Mammary epithelial cell (primary cell): ENCODE measurements at regions of chr1 and their contacts with region 1.

Region 1: DNA sequence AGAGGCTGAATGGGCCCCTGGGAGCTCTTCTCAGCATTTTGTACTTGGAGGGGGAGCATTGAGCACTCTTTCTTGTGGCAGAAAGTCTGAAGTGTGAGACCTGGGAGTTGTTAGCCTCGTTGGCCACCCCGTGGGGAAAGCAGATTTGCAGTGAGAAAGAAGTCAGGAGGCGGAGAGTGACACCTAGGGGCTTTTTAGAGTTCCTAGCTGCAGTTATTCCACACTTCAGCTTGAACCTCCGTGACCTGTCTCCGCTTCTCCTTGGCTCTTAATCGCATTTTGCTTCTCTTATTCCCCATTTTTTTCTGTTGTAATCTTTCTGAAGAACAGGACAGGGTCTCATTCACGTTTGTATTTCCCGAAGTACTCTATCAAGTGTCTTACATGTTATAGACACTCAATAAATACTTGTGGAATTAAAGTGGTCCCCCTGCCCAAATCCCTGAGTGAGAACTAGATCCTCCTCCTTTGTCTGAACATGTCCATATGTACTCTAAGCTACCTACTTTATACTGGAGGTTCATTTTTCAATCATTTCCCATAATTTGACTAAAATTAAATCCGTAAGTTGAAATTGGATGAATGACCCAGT is 14.5 kb upstream of the C1orf141 start:
- DNase-seq: peak; percentile 75
- H3K4me3 ChIP-seq: no peak overlapping the region
- H3K27ac ChIP-seq: peak overlapping the region; percentile 13
- H3K4me1 ChIP-seq: peaks cover 23% of the 10 kb centered on the region
- H3K27me3 ChIP-seq: no peaks in the 10 kb centered on the region
- CTCF ChIP-seq: peak; percentile 84 to 93

Region 2: DNA sequence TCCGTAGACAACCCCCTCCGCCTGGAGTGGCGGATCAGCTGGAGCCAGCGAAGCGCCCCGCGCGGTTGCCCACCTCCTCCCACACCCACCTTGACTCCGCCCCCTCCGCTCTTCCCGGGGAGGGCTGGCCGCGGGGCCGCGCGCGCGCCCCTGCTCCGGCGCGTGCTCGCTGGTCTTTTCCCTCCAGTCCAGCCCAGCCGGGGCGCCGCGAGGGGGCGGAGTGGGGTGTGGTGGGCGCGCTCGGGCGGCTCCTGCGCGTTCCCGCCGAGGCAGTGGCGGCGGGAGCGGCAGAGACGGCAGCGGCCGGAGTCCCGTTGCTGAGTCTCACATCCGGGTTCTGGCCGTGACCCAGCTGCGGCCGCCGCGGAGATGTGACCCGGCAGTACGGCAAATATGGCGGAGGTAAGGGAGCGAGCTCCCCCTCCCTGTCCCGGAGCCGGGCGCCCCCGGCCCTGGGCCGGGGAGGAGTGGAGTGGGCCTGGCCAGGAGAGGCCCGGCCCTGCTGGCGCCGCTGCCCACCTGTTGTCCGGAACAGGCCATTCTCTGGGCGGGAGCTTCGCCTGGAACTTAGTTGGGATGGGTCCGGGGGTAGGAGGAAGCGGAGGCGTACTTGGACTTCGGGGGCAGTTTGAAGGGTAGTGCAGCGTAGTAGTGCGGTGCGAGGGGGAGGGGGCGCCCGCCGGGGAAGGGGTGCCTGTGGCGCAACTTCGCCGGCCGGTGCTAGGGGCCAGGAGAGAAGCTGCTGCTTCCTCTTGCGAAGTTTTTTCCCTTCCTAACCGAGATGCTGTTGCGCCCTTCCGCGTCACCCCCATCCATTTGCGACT is 219.1 kb before region 1 on chr1:
- CTCF ChIA-PET with region 1: no interaction called
- dilution Hi-C with region 1: no loop called
- in situ Hi-C with region 1: no loop called
- intact Hi-C with region 1: loop called (anchors 5 kb)
- DNase-seq: peak; percentile 96
- H3K4me3 ChIP-seq: peak overlapping the region; percentile 70 to 87 (median 85)
- H3K27ac ChIP-seq: peak overlapping the region; percentile 91
- H3K4me1 ChIP-seq: peaks cover 19% of the 10 kb centered on the region
- H3K27me3 ChIP-seq: no peaks in the 10 kb centered on the region
- CTCF ChIP-seq: peak in 1 of 2 donors; percentile 24

Region 3: GRCh38 chr1:66996018-66996682 is 153.1 kb before region 1 on chr1:
- CTCF ChIA-PET with region 1: interaction called, 10 read pairs
- dilution Hi-C with region 1: no loop called
- in situ Hi-C with region 1: loop called (anchors 5 kb)
- intact Hi-C with region 1: loop called (anchors 1 kb)
- DNase-seq: peak; percentile 54
- H3K4me3 ChIP-seq: no peak overlapping the region
- H3K27ac ChIP-seq: no peak overlapping the region
- H3K4me1 ChIP-seq: no peaks in the 10 kb centered on the region
- H3K27me3 ChIP-seq: no peaks in the 10 kb centered on the region
- CTCF ChIP-seq: peak; percentile 86 to 87

Region 4: DNA sequence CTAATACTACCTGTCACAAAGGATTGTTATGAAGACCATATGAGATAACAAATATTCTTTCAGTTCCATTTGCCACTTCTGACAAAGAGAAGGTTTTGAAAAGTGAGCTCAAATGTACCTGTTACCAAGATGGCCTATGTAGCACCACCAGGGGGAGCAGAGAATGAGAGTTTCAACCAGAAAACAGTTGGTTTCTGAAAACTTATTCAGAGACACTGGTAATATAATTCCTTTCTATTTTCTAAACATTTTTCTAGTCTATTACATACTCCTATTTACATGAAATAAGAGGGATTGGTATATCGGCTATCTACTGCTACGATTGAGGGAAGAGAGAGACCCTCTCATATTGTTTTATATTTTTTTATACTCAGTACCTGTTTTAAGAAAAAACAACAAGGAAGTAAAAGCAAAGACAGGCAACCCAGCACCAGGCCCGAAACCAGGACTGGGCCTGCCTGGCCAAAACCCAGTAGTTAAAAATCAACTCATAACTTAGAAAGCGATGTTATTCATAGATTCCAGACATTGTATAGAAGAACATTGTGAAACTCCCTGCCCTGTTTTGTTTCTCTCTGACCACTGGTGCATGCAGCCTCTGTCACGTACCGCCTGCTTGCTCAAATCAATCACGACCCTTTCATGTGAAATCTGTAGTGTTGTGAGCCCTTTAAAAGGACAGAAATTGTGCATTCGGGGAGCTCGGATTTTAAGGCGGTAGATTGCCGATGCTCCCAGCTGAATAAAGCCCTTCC is 65.3 kb after region 1 on chr1:
- CTCF ChIA-PET with region 1: interaction called, 6 read pairs
- dilution Hi-C with region 1: no loop called
- in situ Hi-C with region 1: no loop called
- intact Hi-C with region 1: loop called (anchors 1 kb)
- DNase-seq: peak; percentile 38
- H3K4me3 ChIP-seq: no peak overlapping the region
- H3K27ac ChIP-seq: no peak overlapping the region
- H3K4me1 ChIP-seq: peaks cover 3% of the 10 kb centered on the region
- H3K27me3 ChIP-seq: no peaks in the 10 kb centered on the region
- CTCF ChIP-seq: peak; percentile 54 to 71